ENCODE measurements at regions of chr6 and their contacts with region 1.

Region 1: DNA sequence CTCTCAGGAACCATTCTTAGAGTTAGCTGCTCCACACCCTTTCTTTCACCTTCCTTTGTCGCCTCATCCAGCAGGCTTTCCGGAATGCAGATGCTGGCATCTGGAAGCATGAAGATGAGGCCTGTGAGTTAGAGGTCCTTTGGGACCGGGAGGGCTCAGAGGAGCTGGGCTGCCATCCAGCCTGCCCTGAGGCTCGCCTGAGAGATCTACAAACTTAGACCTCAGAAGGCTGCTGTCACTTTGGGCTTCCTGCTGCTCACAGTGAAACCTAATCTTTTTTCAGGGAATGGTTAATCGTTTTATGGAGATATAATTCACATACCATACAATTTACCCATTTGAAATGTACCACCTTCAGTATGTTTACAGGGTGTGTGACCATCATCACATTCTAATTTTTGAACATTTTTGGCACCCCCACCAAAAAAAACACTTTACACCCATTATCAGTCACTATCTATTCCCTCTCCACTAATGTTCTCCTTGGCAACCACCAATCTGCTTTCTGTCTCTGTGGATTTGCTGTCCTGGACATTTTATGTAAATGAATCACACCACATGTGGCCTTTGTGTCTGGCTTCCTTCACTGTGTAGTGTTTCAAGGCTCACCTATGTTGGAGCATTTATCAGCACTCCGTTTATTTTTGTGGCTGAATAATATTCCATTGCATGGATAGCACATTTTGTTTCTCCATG is 20.0 kb upstream of the MPC1 start:
- DNase-seq: peak; percentile 91
- H3K4me3 ChIP-seq: no peak overlapping the region
- H3K27ac ChIP-seq: no peak overlapping the region
- H3K4me1 ChIP-seq: peaks cover 11% of the 10 kb centered on the region
- H3K27me3 ChIP-seq: no peaks in the 10 kb centered on the region
- CTCF ChIP-seq: no peak

Region 2: GRCh38 chr6:164870164-164870563 is 1532.6 kb before region 1 on chr6:
- CTCF ChIA-PET with region 1: no interaction called
- POLR2A ChIA-PET with region 1: no interaction called
- intact Hi-C with region 1: no loop called
- DNase-seq: no peak
- H3K4me3 ChIP-seq: no peak overlapping the region
- H3K27ac ChIP-seq: no peak overlapping the region
- H3K4me1 ChIP-seq: no peaks in the 10 kb centered on the region
- H3K27me3 ChIP-seq: no peaks in the 10 kb centered on the region
- CTCF ChIP-seq: no peak

Region 3: DNA sequence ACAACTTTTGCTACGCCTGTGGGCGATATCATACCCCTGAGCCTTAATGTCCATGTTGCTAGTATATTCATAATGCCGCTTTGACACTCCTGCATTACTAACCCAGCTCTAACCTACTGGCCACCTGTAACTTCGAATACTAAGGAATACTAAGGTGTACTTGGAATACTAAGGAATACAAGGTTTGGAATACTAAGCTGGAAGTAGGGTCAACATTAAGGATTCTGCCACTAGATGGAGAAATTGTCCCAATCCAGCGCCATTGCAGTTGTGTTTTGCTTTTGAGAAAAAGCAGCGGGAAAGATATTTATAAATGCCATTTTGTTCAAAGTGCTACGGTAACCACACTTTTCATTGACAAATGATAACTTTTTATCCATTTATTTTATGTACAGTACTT is 245.8 kb before region 1 on chr6:
- CTCF ChIA-PET with region 1: interaction called, 8 read pairs
- POLR2A ChIA-PET with region 1: no interaction called
- intact Hi-C with region 1: loop called (anchors 1 kb)
- DNase-seq: peak; percentile 35
- H3K4me3 ChIP-seq: no peak overlapping the region
- H3K27ac ChIP-seq: no peak overlapping the region
- H3K4me1 ChIP-seq: no peaks in the 10 kb centered on the region
- H3K27me3 ChIP-seq: peaks cover 10% of the 10 kb centered on the region
- CTCF ChIP-seq: peak; percentile 54

Region 4: GRCh38 chr6:166173281-166173951 is 229.3 kb before region 1 on chr6:
- CTCF ChIA-PET with region 1: no interaction called
- POLR2A ChIA-PET with region 1: no interaction called
- intact Hi-C with region 1: loop called (anchors 5 kb)
- DNase-seq: peak; percentile 89
- H3K4me3 ChIP-seq: peak overlapping the region; percentile 10
- H3K27ac ChIP-seq: no peak overlapping the region
- H3K4me1 ChIP-seq: peaks cover 16% of the 10 kb centered on the region
- H3K27me3 ChIP-seq: peaks cover 33% of the 10 kb centered on the region
- CTCF ChIP-seq: no peak

Region 5: GRCh38 chr6:166275714-166276166 is 127.0 kb before region 1 on chr6:
- CTCF ChIA-PET with region 1: interaction called, 10 read pairs
- POLR2A ChIA-PET with region 1: no interaction called
- intact Hi-C with region 1: loop called (anchors 1 kb)
- DNase-seq: peak; percentile 68
- H3K4me3 ChIP-seq: no peak overlapping the region
- H3K27ac ChIP-seq: no peak overlapping the region
- H3K4me1 ChIP-seq: no peaks in the 10 kb centered on the region
- H3K27me3 ChIP-seq: no peaks in the 10 kb centered on the region
- CTCF ChIP-seq: peak; percentile 99

Region 6: GRCh38 chr6:166300357-166300987 is 102.3 kb before region 1 on chr6:
- CTCF ChIA-PET with region 1: no interaction called
- POLR2A ChIA-PET with region 1: no interaction called
- intact Hi-C with region 1: no loop called
- DNase-seq: no peak
- H3K4me3 ChIP-seq: no peak overlapping the region
- H3K27ac ChIP-seq: no peak overlapping the region
- H3K4me1 ChIP-seq: no peaks in the 10 kb centered on the region
- H3K27me3 ChIP-seq: peaks cover 18% of the 10 kb centered on the region
- CTCF ChIP-seq: no peak

Region 7: GRCh38 chr6:166313255-166314070 is 89.3 kb before region 1 on chr6:
- CTCF ChIA-PET with region 1: interaction called, 5 read pairs
- POLR2A ChIA-PET with region 1: no interaction called
- intact Hi-C with region 1: loop called (anchors 2 kb)
- DNase-seq: peak; percentile 56
- H3K4me3 ChIP-seq: no peak overlapping the region
- H3K27ac ChIP-seq: no peak overlapping the region
- H3K4me1 ChIP-seq: no peaks in the 10 kb centered on the region
- H3K27me3 ChIP-seq: peaks cover 15% of the 10 kb centered on the region
- CTCF ChIP-seq: peak; percentile 83